Heart left ventricle (tissue), 16 donors: ENCODE measurements at regions of chr4 and their contacts with region 1.

Region 1: DNA sequence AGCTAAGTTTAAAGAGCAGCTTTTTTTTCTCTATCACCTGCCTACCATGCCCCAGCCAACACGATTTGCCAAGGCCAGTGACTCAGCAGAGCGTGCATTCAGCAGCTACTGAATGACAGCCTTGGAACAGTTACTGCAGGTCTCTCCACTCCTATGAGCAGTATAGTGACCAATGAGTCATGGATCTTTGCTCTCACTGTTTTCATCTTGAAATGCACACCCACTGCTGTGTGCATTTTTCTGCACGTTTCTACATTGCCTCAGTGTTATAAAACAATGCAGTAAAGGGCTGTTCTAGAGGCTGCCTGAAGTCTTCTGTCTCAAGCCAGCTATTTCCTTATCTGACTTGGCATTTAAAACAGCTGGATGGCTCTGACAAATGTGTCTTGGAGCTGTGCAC is 66.0 kb upstream of the C4orf54 start:
- DNase-seq: peak in 4 of 5 donors; percentile 55 to 78 (median 67)
- ATAC-seq: peak; percentile 78 to 99 (median 96)
- H3K4me3 ChIP-seq: no peak overlapping the region
- H3K27ac ChIP-seq: peak overlapping the region in 11 of 12 donors; percentile 1 to 77 (median 64)
- H3K4me1 ChIP-seq: peaks cover 0 to 27% (median 14%) of the 10 kb centered on the region in 12 donors
- H3K27me3 ChIP-seq: no peaks in the 10 kb centered on the region
- CTCF ChIP-seq: no peak
- POLR2A ChIP-seq: no peak

Region 2: GRCh38 chr4:99642725-99643489 is 80.7 kb before region 1 on chr4:
- intact Hi-C with region 1: loop called in 1 of 10 experiments (anchors 10 kb)
- DNase-seq: peak; percentile 74 to 89 (median 76)
- ATAC-seq: peak; percentile 96 to 99 (median 98)
- H3K4me3 ChIP-seq: no peak overlapping the region
- H3K27ac ChIP-seq: peak overlapping the region; percentile 4 to 69 (median 46)
- H3K4me1 ChIP-seq: peaks cover 0 to 23% (median 3%) of the 10 kb centered on the region in 12 donors
- H3K27me3 ChIP-seq: no peaks in the 10 kb centered on the region
- CTCF ChIP-seq: no peak
- POLR2A ChIP-seq: no peak

Region 3: DNA sequence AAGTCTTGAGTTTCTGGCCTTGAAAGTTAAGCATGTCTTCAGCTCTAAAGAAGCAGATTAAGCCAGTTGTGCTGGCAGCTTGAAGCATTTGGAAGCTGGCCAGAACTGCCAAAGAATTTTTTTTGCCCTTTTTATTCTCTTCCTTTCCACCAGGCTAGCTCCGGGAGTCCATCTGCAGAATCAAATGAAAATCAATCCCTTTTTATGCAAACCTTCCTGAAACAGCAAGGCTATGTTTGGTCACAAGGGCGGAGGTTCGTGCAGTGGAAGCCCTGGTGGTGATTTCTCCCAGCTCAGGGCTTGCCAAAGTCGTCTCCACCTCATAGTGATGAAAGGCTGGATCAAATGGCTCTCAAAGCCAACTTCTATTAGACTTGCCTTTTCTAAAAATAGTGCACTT is 44.4 kb before region 1 on chr4:
- intact Hi-C with region 1: loop called in 1 of 10 experiments (anchors 5 kb)
- DNase-seq: peak in 4 of 5 donors; percentile 50 to 77 (median 60)
- ATAC-seq: peak; percentile 85 to 98 (median 96)
- H3K4me3 ChIP-seq: no peak overlapping the region
- H3K27ac ChIP-seq: peak overlapping the region in 8 of 12 donors; percentile 4 to 70 (median 54)
- H3K4me1 ChIP-seq: peaks cover 0 to 14% (median 4%) of the 10 kb centered on the region in 12 donors
- H3K27me3 ChIP-seq: no peaks in the 10 kb centered on the region
- CTCF ChIP-seq: peak in 4 of 12 donors; percentile 5 to 28 (median 8)
- POLR2A ChIP-seq: no peak

Region 4: DNA sequence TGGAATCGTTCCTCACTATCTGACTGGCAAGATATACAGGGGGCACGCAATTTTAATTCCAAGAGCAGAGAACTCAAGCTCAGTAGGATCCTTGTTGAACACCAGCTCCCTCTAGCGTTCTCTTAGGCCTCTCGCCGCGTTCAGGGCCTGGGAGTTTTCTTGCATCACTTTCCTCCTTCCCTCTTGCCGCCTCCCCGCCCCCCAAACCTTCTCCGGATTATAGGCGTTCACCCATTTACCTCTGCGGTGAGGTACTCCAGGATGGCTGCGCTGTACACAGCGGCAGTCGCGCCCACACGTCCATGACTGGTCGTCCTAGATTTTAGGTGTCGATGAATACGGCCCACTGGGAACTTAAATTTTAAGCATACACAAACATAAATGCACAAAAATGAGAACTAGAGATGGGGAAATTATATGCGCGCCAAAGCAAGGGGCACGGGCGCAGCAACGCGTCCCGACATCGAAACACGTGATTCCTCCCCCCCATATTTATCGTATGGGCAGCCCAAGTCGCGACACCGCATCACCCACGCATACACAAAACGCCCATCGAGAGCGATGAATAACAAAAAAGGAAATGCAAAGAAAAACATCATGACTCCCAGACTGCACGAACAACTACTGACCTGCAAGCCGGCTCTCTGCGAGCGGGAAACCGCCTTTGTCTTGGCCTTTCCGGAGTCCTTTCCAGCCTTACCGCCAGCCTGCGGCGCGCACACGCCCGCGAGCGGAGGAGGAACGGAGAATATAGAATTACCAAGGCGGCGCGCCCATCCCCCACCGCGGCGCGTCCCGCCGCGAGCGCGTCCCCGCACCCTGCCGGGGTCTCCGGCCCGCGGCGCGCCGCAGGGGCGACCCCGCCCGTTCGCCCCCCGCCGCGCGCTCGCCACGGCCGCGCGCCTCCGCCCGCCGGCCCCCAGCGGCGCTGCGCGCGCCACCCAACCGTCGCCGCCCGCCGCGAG is 225.7 kb after region 1 on chr4:
- intact Hi-C with region 1: loop called in 2 of 10 experiments (anchors 5 to 10 kb)
- DNase-seq: peak; percentile 84 to 90 (median 86)
- ATAC-seq: peak; percentile 14 to 48 (median 33)
- H3K4me3 ChIP-seq: peak overlapping the region; percentile 68 to 97 (median 85)
- H3K27ac ChIP-seq: peak overlapping the region; percentile 31 to 96 (median 88)
- H3K4me1 ChIP-seq: peaks cover 0 to 47% (median 33%) of the 10 kb centered on the region in 12 donors
- H3K27me3 ChIP-seq: no peaks in the 10 kb centered on the region
- CTCF ChIP-seq: peak; percentile 70 to 92 (median 84)
- POLR2A ChIP-seq: no peak